Naive thymus-derived CD4-positive, alpha-beta T cell (primary cell): ENCODE measurements at regions of chr17 and their contacts with region 1.

Region 1: DNA sequence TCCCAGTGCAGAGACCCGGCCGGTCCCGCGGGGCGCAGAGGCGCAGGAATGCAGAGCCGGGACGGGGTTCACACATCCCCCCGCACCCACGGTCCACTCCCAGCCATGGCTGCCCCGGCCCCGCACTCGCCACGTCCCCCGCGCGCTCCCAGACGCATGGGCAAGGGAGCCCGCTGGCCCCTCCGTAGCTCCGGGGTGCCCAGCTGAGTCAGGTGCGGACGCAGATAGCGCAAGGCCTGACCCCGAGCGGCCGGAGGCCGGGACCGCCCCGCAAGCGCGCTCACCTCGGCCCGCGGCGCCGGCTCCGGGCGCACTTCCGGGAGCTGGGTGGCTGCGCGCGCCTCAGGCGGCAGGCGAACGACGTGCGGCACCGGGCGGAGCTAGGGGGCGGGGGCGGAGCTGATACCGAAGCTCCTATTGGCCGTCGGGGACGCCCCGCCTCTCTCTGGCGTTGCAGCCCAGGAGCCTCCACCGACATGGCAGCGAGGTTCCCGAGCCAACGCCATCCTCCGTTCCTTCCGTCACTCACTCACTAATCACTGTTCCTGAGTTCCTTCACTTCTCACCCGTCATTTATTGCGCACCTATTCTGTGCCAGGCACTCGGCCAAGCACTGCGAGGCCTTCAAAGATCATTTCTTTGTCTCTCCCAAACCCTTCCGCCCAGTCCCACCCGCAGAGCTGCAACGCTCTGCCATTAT is at the start of gene ZNF18:
- DNase-seq: peak; percentile 90 to 97 (median 94)
- ATAC-seq: peak; percentile 100
- H3K4me3 ChIP-seq: peak within 1 kb of the TSS; percentile 92
- H3K4me3 Mint-ChIP-seq: peak within 1 kb of the TSS; percentile 93 to 99 (median 98)
- H3K27ac ChIP-seq: peak within 1 kb of the TSS; percentile 90
- H3K27ac Mint-ChIP-seq: peak within 1 kb of the TSS; percentile 89 to 99 (median 97)
- H3K4me1 ChIP-seq: peaks cover 4 to 5% of the 10 kb centered on the region in 2 donors
- H3K4me1 Mint-ChIP-seq: peaks cover 14 to 35% (median 26%) of the 10 kb centered on the region in 7 donors
- H3K27me3 ChIP-seq: no peaks in the 10 kb centered on the region
- H3K27me3 Mint-ChIP-seq: peaks cover 0 to 6% (median 0%) of the 10 kb centered on the region in 5 donors
- total RNA-seq, gene ZNF18: 10.4 to 13.9 (median 11.3) TPM

Region 2: GRCh38 chr17:10697092-10698081 is 1299.9 kb before region 1 on chr17 and contains the starts of genes ADPRM and SCO1:
- CTCF ChIA-PET with region 1: no interaction called
- POLR2A ChIA-PET with region 1: interaction called, 8 read pairs
- intact Hi-C with region 1: loop called (anchors 1 to 10 kb)
- DNase-seq: peak; percentile 77 to 89 (median 85)
- ATAC-seq: peak; percentile 97
- H3K4me3 ChIP-seq: peak within 1 kb of the TSS; percentile 95
- H3K4me3 Mint-ChIP-seq: peak within 1 kb of the TSS; percentile 83 to 100 (median 95)
- H3K27ac ChIP-seq: peak within 1 kb of the TSS; percentile 97
- H3K27ac Mint-ChIP-seq: peak within 1 kb of the TSS; percentile 90 to 99 (median 96)
- H3K4me1 ChIP-seq: peaks cover 17 to 43% of the 10 kb centered on the region in 2 donors
- H3K4me1 Mint-ChIP-seq: peaks cover 34 to 77% (median 65%) of the 10 kb centered on the region in 7 donors
- H3K27me3 ChIP-seq: no peaks in the 10 kb centered on the region
- H3K27me3 Mint-ChIP-seq: no peaks in the 10 kb centered on the region
- total RNA-seq, gene ADPRM: 16.4 to 70.4 (median 32.1) TPM
- total RNA-seq, gene SCO1: 13.6 to 29.2 (median 26.7) TPM

Region 3: DNA sequence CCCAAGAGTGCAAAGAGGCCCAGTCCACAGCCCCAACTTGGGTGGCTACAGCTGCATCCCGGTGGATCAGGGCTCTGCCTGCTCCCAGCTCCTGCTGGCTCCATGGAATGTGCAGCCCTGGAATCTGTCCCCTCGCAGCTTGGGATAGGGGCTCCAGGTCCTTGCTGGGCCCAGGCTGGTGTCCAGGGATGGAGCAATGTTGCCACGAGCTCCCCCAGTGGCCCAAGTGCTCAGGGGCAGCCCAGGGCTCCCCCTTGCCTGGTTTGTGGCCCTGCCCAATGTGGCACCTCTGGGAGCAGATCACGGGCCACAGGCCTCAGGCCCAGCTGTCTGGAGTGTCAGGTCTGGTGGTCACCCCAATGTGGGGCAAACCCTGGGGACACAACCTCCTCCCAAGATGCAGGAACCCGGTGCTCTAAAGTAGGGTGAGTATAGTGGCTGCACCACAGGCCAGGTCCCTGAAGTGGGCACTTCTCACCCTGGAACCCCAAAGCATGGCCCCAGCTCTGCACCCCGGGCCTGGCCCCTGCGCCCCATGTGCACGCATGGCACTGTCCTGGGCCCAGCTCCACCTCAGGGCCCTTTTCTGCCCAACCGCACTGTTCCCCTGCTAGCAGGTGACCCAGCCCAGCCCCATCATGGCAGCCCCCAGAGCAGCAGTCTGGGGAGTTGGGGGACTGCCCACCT is 413.8 kb before region 1 on chr17:
- CTCF ChIA-PET with region 1: no interaction called
- POLR2A ChIA-PET with region 1: no interaction called
- intact Hi-C with region 1: no loop called
- DNase-seq: no peak
- ATAC-seq: no peak
- H3K4me3 ChIP-seq: no peak overlapping the region
- H3K4me3 Mint-ChIP-seq: no peak overlapping the region
- H3K27ac ChIP-seq: no peak overlapping the region
- H3K27ac Mint-ChIP-seq: no peak overlapping the region
- H3K4me1 ChIP-seq: no peaks in the 10 kb centered on the region
- H3K4me1 Mint-ChIP-seq: no peaks in the 10 kb centered on the region
- H3K27me3 ChIP-seq: no peaks in the 10 kb centered on the region
- H3K27me3 Mint-ChIP-seq: no peaks in the 10 kb centered on the region

Region 4: DNA sequence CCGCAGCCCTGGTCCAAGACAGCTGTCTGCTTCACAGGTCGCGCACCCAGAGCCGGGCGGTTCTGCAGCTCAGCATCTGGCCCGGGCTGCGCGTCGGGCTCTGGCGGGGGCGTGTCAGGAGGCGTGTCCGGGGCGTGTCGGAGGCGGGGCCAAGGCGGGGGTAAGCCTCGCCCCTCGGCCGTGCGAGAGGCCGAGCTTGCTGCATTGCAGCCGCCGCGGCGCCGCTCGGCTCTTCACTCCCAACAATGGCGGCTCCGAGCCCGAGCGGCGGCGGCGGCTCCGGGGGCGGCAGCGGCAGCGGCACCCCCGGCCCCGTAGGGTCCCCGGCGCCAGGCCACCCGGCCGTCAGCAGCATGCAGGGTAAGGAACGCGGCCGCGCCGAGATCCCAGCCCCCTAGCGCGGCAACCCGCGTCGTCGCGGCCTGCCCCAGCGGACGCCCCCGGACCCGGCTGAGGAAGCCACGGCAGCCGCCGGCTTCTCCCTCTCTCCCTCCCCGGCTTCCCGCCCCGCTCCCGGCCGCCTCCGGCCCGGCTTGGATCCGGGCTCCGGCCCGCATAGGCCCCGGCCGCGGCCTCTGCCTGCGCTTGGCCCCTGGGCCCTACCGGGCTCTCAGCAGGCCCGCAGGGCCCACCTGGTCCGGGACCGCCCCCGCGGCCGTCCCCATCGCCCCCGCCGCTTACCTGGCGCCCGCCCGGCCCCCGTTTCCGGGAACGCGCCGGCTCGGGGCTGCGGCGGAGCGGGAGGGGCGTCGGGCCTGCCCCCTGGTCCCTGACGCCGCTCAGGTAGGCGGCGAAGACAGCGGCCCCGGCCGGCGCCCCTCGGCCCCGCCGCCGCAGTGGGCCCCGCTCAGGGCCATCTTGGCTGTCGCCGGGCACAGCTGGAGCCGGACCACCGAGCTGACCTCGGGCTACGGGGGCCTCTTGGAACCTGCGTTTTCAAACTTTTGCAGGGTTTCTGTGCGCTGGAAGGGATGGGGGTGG is 23.6 kb after region 1 on chr17 and contains the start of gene MAP2K4:
- CTCF ChIA-PET with region 1: interaction called, 6 read pairs
- POLR2A ChIA-PET with region 1: interaction called, 310 read pairs
- intact Hi-C with region 1: loop called (anchors 1 kb)
- DNase-seq: peak; percentile 87 to 99 (median 94)
- ATAC-seq: peak; percentile 100
- H3K4me3 ChIP-seq: peak within 1 kb of the TSS; percentile 57
- H3K4me3 Mint-ChIP-seq: peak within 1 kb of the TSS; percentile 79 to 91 (median 84)
- H3K27ac ChIP-seq: peak within 1 kb of the TSS; percentile 89
- H3K27ac Mint-ChIP-seq: peak within 1 kb of the TSS; percentile 31 to 88 (median 83)
- H3K4me1 ChIP-seq: peaks cover 16 to 17% of the 10 kb centered on the region in 2 donors
- H3K4me1 Mint-ChIP-seq: peaks cover 31 to 56% (median 53%) of the 10 kb centered on the region in 7 donors
- H3K27me3 ChIP-seq: no peaks in the 10 kb centered on the region
- H3K27me3 Mint-ChIP-seq: peaks cover 0 to 14% (median 0%) of the 10 kb centered on the region in 5 donors
- total RNA-seq, gene MAP2K4: 26.3 to 45.1 (median 33.9) TPM

Region 5: DNA sequence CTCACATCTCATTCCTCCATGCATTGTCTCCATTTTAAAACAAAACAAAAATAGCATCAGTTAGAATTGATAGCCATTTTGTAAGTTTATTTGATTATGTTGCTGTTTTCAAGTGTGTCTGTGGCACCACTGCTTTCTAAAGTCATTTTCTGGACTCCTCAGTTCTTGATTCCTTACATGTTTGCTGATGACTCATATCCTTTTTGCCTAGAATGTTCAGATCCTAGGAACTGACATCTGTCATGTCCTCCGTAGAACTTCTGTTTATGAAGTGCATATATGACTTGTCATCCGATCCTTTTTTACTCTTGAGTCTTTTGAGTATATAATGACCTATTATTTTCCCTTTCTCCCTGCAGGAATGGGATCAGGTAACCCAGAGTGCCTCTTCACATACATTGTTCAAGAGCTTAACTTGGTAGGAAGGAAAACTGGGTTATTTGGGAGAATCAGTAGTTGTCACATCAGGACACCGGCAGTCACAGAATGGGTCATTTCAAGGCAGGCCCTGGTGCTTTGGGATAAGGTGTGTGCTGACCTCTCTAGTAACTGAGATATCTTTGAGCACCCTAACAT is 92.6 kb after region 1 on chr17:
- CTCF ChIA-PET with region 1: no interaction called
- POLR2A ChIA-PET with region 1: no interaction called
- intact Hi-C with region 1: loop called in 1 of 2 experiments (anchors 10 kb)
- DNase-seq: no peak
- ATAC-seq: no peak
- H3K4me3 ChIP-seq: no peak overlapping the region
- H3K4me3 Mint-ChIP-seq: no peak overlapping the region
- H3K27ac ChIP-seq: no peak overlapping the region
- H3K27ac Mint-ChIP-seq: no peak overlapping the region
- H3K4me1 ChIP-seq: no peaks in the 10 kb centered on the region
- H3K4me1 Mint-ChIP-seq: peaks cover 14 to 42% (median 25%) of the 10 kb centered on the region in 7 donors
- H3K27me3 ChIP-seq: no peaks in the 10 kb centered on the region
- H3K27me3 Mint-ChIP-seq: no peaks in the 10 kb centered on the region

Region 6: DNA sequence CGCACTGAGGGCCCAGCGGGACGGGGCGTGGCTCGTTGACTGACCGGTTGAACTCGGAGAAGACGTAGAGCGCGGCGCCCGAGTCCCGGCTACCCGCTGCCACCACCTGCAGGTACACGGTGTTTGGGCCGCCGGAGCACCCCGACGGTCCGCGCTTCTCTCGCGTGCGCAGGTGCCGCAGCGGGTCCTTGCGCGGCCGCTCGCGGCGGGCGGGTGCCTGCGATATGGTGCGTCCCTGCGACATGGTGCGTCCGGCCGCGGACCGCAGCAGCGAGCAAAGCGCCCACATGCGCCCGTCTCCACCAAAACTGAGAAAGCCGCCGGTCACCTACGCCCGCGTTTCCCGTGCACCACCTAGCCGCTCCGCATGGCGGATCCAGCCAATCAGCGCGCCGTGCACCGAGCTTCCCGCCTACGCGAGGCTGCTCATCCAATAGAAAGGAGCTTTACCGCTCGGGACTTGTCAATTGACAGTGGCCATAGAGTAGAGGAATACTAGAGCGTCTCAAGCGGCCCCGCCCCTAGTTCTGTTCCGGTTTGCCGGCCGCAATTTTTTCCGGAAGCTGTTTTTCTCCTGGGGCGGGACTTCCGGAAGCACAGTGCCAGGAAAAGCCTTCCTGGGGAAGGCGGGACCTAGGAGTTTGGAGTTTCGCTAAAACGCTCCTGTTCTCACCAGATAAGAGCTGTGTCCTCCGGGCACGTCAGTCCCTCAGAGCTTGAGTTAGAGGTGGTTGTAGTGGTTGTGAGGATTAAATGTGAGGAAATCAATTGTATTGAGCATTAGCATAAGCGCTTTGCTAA is 1020.6 kb after region 1 on chr17 and contains the start of gene ELAC2:
- CTCF ChIA-PET with region 1: interaction called, 3 read pairs
- POLR2A ChIA-PET with region 1: interaction called, 8 read pairs
- intact Hi-C with region 1: loop called in 1 of 2 experiments (anchors 1 kb)
- DNase-seq: peak; percentile 86 to 98 (median 95)
- ATAC-seq: peak; percentile 100
- H3K4me3 ChIP-seq: peak within 1 kb of the TSS; percentile 77
- H3K4me3 Mint-ChIP-seq: peak within 1 kb of the TSS; percentile 90 to 99 (median 96)
- H3K27ac ChIP-seq: peak within 1 kb of the TSS; percentile 78
- H3K27ac Mint-ChIP-seq: peak within 1 kb of the TSS; percentile 85 to 99 (median 97)
- H3K4me1 ChIP-seq: peaks cover 6 to 16% of the 10 kb centered on the region in 2 donors
- H3K4me1 Mint-ChIP-seq: peaks cover 18 to 48% (median 35%) of the 10 kb centered on the region in 7 donors
- H3K27me3 ChIP-seq: no peaks in the 10 kb centered on the region
- H3K27me3 Mint-ChIP-seq: no peaks in the 10 kb centered on the region
- total RNA-seq, gene ELAC2: 65.2 to 78.9 (median 75.3) TPM